Transverse colon (tissue), 4 donors: ENCODE measurements at regions of chr5 and their contacts with region 1.

Region 1: GRCh38 chr5:132386644-132387286 is 17.3 kb downstream of the SLC22A5 start:
- DNase-seq: peak; percentile 81
- H3K4me3 ChIP-seq: no peak overlapping the region
- H3K27ac ChIP-seq: peak overlapping the region; percentile 85 to 90 (median 87)
- H3K4me1 ChIP-seq: peaks cover 29 to 54% (median 41%) of the 10 kb centered on the region in 4 donors
- H3K27me3 ChIP-seq: no peaks in the 10 kb centered on the region
- CTCF ChIP-seq: peak; percentile 76 to 91 (median 84)
- EP300 ChIP-seq: no peak
- POLR2A ChIP-seq: no peak

Region 2: GRCh38 chr5:132073231-132074013 is 313.3 kb before region 1 on chr5 and contains the start of gene CSF2:
- in situ Hi-C with region 1: no loop called
- intact Hi-C with region 1: no loop called
- DNase-seq: no peak
- H3K4me3 ChIP-seq: no peak within 1 kb of the TSS
- H3K27ac ChIP-seq: no peak within 1 kb of the TSS
- H3K4me1 ChIP-seq: no peaks in the 10 kb centered on the region
- H3K27me3 ChIP-seq: no peaks in the 10 kb centered on the region
- CTCF ChIP-seq: no peak
- EP300 ChIP-seq: no peak
- POLR2A ChIP-seq: no peak
- total RNA-seq, gene CSF2: not detected

Region 3: GRCh38 chr5:132500931-132501630 is 114.3 kb after region 1 on chr5:
- in situ Hi-C with region 1: loop called in 2 of 4 experiments (anchors 10 kb)
- intact Hi-C with region 1: loop called (anchors 1 kb)
- DNase-seq: peak; percentile 82
- H3K4me3 ChIP-seq: no peak overlapping the region
- H3K27ac ChIP-seq: peak overlapping the region; percentile 95 to 99 (median 98)
- H3K4me1 ChIP-seq: peaks cover 39 to 86% (median 69%) of the 10 kb centered on the region in 4 donors
- H3K27me3 ChIP-seq: no peaks in the 10 kb centered on the region
- CTCF ChIP-seq: peak; percentile 83 to 97 (median 85)
- EP300 ChIP-seq: peak; percentile 42
- POLR2A ChIP-seq: peak; percentile 53

Region 4: GRCh38 chr5:132714456-132715307 is 327.9 kb after region 1 on chr5:
- in situ Hi-C with region 1: loop called in 2 of 4 experiments (anchors 25 kb)
- intact Hi-C with region 1: no loop called
- DNase-seq: no peak
- H3K4me3 ChIP-seq: no peak overlapping the region
- H3K27ac ChIP-seq: no peak overlapping the region
- H3K4me1 ChIP-seq: peaks cover 0 to 3% (median 0%) of the 10 kb centered on the region in 4 donors
- H3K27me3 ChIP-seq: no peaks in the 10 kb centered on the region
- CTCF ChIP-seq: peak; percentile 27 to 51 (median 40)
- EP300 ChIP-seq: no peak
- POLR2A ChIP-seq: no peak

Region 5: GRCh38 chr5:132746954-132747615 is 360.3 kb after region 1 on chr5 and contains the start of gene CCNI2:
- in situ Hi-C with region 1: no loop called
- intact Hi-C with region 1: no loop called
- DNase-seq: peak; percentile 81
- H3K4me3 ChIP-seq: peak within 1 kb of the TSS; percentile 36 to 56 (median 46)
- H3K27ac ChIP-seq: peak within 1 kb of the TSS; percentile 59 to 81 (median 70)
- H3K4me1 ChIP-seq: peaks cover 0 to 15% (median 5%) of the 10 kb centered on the region in 4 donors
- H3K27me3 ChIP-seq: peaks cover 56% of the 10 kb centered on the region
- CTCF ChIP-seq: peak in 4 of 5 experiments; percentile 23 to 48 (median 35)
- EP300 ChIP-seq: no peak
- POLR2A ChIP-seq: peak; percentile 54
- total RNA-seq, gene CCNI2: 3.0 to 13.0 (median 7.1) TPM

Region 6: DNA sequence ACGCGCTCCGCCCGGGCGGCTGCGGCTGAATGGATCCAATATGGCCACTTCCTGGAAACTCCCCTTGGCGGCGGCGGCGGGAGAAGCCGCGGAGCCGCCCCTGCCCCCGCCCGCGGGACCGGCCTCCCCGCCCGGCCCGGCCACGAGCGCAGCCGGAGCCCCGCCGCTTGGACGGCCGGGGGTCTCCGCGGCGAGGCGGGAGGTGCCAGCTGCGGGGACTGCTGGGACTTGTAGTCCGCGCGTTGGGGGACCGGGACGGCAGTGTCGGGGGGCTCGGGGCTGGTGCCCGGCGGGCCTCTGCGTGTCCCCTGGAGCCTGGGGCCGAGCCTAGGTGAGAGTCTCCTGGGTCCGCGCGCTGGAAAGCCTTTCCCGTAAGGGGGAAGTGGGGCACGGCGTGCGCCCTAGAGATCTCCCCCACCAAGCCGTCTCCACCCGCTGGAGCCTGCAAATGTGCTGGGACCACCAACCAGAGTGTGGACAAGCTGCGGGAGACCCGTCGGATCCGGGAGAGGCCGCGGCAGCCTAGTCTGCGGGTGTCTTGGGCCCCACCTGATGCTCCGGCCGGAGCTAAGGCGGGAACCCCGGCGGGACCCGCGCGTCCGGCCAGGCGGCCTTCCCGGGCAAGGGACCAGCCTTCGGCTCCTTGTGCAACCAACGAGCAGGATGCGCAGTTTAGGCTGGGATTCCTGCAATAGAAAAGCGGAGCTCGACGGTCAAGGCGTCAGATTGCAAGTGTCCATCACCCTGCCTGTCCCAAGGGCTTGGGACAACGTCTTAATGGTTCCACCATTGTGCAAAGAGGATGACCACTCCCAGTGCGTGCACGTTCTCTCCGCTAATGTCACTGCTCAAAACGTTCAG is 390.7 kb after region 1 on chr5 and contains the start of gene SEPTIN8:
- in situ Hi-C with region 1: loop called in 1 of 4 experiments (anchors 25 kb)
- intact Hi-C with region 1: no loop called
- DNase-seq: peak; percentile 59
- H3K4me3 ChIP-seq: peak within 1 kb of the TSS; percentile 83 to 94 (median 88)
- H3K27ac ChIP-seq: peak within 1 kb of the TSS; percentile 80 to 84 (median 83)
- H3K4me1 ChIP-seq: peaks cover 7 to 26% (median 21%) of the 10 kb centered on the region in 4 donors
- H3K27me3 ChIP-seq: no peaks in the 10 kb centered on the region
- CTCF ChIP-seq: peak in 1 of 5 experiments; percentile 1
- EP300 ChIP-seq: no peak
- POLR2A ChIP-seq: no peak
- total RNA-seq, gene SEPTIN8: 38.4 to 70.7 (median 53.5) TPM

Region 7: GRCh38 chr5:132820162-132820754 is 433.5 kb after region 1 on chr5:
- in situ Hi-C with region 1: loop called in 3 of 4 experiments (anchors 25 kb)
- intact Hi-C with region 1: no loop called
- DNase-seq: peak; percentile 95
- H3K4me3 ChIP-seq: peak overlapping the region in 1 of 4 donors; percentile 16
- H3K27ac ChIP-seq: peak overlapping the region in 2 of 4 donors; percentile 8 to 47
- H3K4me1 ChIP-seq: peaks cover 0 to 15% (median 9%) of the 10 kb centered on the region in 4 donors
- H3K27me3 ChIP-seq: peaks cover 5% of the 10 kb centered on the region
- CTCF ChIP-seq: peak; percentile 84 to 98 (median 90)
- EP300 ChIP-seq: no peak
- POLR2A ChIP-seq: no peak

Region 8: DNA sequence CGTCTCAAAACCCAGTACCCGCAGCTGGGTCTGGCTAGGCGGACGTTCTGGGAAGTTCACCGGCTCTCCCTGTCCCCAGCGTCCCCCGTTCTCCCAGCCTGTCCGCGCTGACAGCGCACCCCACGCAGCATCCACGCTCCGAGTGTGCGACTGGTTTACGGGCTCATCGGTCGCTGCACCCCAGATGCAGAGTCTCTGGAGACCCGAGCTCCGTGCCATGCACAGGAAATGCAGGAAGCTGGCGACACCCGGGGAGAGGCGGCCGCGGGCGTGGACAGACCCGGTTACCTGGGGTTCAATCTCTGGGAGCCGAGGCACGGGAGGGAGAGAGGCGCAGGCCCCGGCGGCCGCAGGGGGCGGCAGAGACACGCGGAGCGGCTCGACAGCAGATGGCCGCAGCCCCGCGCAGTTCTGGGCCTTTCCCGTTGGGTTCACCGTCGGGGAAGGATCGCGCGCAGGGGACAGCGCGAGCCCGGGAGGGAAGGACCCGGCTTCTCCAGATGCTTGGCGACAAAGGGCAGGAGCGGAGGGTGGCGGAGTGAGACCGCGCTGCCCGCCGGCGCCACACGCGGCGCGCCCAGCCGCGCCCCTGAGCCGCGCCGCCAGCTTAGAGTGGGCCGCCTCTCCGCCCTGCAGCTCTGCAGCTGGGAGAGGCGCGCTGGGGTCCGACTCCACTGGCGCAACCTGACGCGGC is 443.1 kb after region 1 on chr5:
- in situ Hi-C with region 1: loop called in 1 of 4 experiments (anchors 25 kb)
- intact Hi-C with region 1: no loop called
- DNase-seq: peak; percentile 87
- H3K4me3 ChIP-seq: peak overlapping the region; percentile 54 to 72 (median 64)
- H3K27ac ChIP-seq: peak overlapping the region; percentile 88 to 92 (median 90)
- H3K4me1 ChIP-seq: peaks cover 5 to 31% (median 21%) of the 10 kb centered on the region in 4 donors
- H3K27me3 ChIP-seq: peaks cover 13% of the 10 kb centered on the region
- CTCF ChIP-seq: peak; percentile 86 to 95 (median 94)
- EP300 ChIP-seq: no peak
- POLR2A ChIP-seq: peak; percentile 18